ENCODE measurements at regions of chr1 and their contacts with region 1.

Region 1: GRCh38 chr1:32939655-32940371 is 24.8 kb downstream of the RNF19B start:
- DNase-seq: no peak
- ATAC-seq: no peak
- H3K4me3 ChIP-seq: no peak overlapping the region
- H3K4me3 Mint-ChIP-seq: no peak overlapping the region
- H3K27ac ChIP-seq: no peak overlapping the region
- H3K27ac Mint-ChIP-seq: no peak overlapping the region
- H3K4me1 ChIP-seq: no peaks in the 10 kb centered on the region
- H3K4me1 Mint-ChIP-seq: no peaks in the 10 kb centered on the region
- H3K27me3 ChIP-seq: no peaks in the 10 kb centered on the region
- H3K27me3 Mint-ChIP-seq: no peaks in the 10 kb centered on the region
- CTCF ChIP-seq: no peak

Region 2: DNA sequence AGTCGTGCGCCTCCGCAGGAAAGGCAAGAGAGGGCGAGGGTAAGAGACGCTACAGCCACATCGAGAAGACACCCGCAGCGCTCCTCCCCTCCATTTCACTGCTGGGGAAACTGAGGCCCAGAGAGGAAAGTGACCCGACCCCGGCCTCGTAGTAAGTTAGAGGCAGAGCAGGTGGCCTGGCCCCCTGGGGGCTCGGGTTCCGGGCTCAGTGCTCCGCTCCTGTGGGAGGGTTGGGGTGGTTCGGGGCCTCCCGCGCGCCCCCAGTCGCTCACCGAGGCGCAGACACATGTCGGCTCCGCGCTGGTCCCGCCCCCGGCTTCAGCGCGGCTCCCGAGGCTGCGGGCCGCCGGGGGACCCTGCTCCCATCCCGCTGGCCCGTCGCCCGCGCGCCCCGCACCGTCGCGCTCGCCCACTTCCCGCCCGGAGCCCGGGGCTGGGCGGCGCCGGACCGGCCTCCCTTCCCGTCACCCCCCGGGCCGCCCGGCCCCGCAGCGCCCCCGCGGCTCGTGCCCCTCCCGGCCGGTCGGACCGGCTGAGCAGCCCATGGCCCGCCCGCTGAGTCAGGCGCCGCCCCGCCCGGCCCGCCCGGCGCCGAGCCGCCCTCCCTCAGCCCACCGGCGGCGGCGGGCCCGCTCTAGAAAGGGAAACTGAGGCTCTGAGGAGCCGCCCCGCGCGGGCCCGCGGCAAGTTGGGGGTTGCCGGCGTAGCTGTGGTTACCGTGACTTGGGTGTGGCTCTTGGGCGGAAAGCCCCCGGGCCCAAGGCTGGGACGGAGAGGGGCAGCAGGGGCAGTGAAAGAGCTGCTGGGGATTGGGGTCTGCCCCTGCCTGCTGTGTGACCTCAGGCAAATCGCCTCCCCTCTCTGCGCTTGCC is 38.6 kb before region 1 on chr1 and contains the start of gene TMEM54:
- CTCF ChIA-PET with region 1: no interaction called
- POLR2A ChIA-PET with region 1: no interaction called
- intact Hi-C with region 1: no loop called
- DNase-seq: peak; percentile 48
- ATAC-seq: peak; percentile 44
- H3K4me3 ChIP-seq: peak within 1 kb of the TSS in 4 of 5 experiments; percentile 24 to 54 (median 40)
- H3K4me3 Mint-ChIP-seq: peak within 1 kb of the TSS; percentile 76
- H3K27ac ChIP-seq: no peak within 1 kb of the TSS
- H3K27ac Mint-ChIP-seq: no peak within 1 kb of the TSS
- H3K4me1 ChIP-seq: peaks cover 9 to 10% of the 10 kb centered on the region in 2 donors
- H3K4me1 Mint-ChIP-seq: peaks cover 11% of the 10 kb centered on the region
- H3K27me3 ChIP-seq: peaks cover 0 to 37% (median 15%) of the 10 kb centered on the region in 4 experiments
- H3K27me3 Mint-ChIP-seq: peaks cover 39% of the 10 kb centered on the region
- CTCF ChIP-seq: no peak
- total RNA-seq, gene TMEM54: not detected in 2 replicates

Region 3: GRCh38 chr1:33007190-33008050 is 67.6 kb after region 1 on chr1:
- CTCF ChIA-PET with region 1: interaction called, 205 read pairs
- POLR2A ChIA-PET with region 1: interaction called, 4 read pairs
- intact Hi-C with region 1: no loop called
- DNase-seq: peak; percentile 37
- ATAC-seq: peak; percentile 56
- H3K4me3 ChIP-seq: no peak overlapping the region
- H3K4me3 Mint-ChIP-seq: no peak overlapping the region
- H3K27ac ChIP-seq: no peak overlapping the region
- H3K27ac Mint-ChIP-seq: no peak overlapping the region
- H3K4me1 ChIP-seq: no peaks in the 10 kb centered on the region
- H3K4me1 Mint-ChIP-seq: peaks cover 2% of the 10 kb centered on the region
- H3K27me3 ChIP-seq: no peaks in the 10 kb centered on the region
- H3K27me3 Mint-ChIP-seq: no peaks in the 10 kb centered on the region
- CTCF ChIP-seq: peak; percentile 16